Activated CD8-positive, alpha-beta T cell treated with anti-CD3 and anti-CD28 coated beads, Interleukin-2, amount 10 ng/mL, durations not matched to agents 7 days and 5 days (primary cell): ENCODE measurements at regions of chr1 and their contacts with region 1.

Region 1: DNA sequence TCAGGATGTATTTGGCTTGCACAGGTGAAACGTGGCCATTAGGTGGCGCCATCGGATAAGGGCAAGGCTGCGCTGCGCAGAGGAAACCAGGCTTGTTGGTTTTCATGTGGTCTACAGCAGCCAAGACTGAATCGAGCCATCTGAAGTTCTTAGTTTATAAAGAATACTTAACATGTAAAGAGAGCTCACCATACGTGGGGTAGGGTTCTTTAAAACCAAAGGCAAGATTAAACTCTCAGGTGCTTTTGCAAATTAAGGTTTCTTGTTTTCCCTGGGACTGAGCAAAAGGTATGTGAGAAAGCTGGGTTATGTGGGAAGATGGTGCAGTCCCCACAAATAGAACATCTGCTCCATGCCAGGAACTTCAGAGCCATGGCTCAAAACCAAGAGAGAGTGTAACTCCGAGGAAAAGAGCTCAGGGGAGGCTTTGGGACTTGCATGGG is 9.3 kb downstream of the MASP2 start:
- DNase-seq: peak; percentile 93
- ATAC-seq: peak; percentile 97
- H3K4me3 Mint-ChIP-seq: no peak overlapping the region
- H3K27ac Mint-ChIP-seq: no peak overlapping the region
- H3K4me1 Mint-ChIP-seq: peaks cover 9% of the 10 kb centered on the region
- H3K27me3 Mint-ChIP-seq: no peaks in the 10 kb centered on the region

Region 2: GRCh38 chr1:10867138-10867721 is 170.5 kb before region 1 on chr1:
- CTCF ChIA-PET with region 1: no interaction called
- POLR2A ChIA-PET with region 1: no interaction called
- DNase-seq: peak; percentile 63
- ATAC-seq: peak; percentile 90
- H3K4me3 Mint-ChIP-seq: no peak overlapping the region
- H3K27ac Mint-ChIP-seq: no peak overlapping the region
- H3K4me1 Mint-ChIP-seq: peaks cover 13% of the 10 kb centered on the region
- H3K27me3 Mint-ChIP-seq: peaks cover 61% of the 10 kb centered on the region

Region 3: GRCh38 chr1:11026052-11026451 is 11.7 kb before region 1 on chr1:
- CTCF ChIA-PET with region 1: interaction called, 22 read pairs
- POLR2A ChIA-PET with region 1: no interaction called
- DNase-seq: no peak
- ATAC-seq: no peak
- H3K4me3 Mint-ChIP-seq: no peak overlapping the region
- H3K27ac Mint-ChIP-seq: no peak overlapping the region
- H3K4me1 Mint-ChIP-seq: peaks cover 14% of the 10 kb centered on the region
- H3K27me3 Mint-ChIP-seq: no peaks in the 10 kb centered on the region

Region 4: GRCh38 chr1:11072216-11072917 is 34.6 kb after region 1 on chr1:
- CTCF ChIA-PET with region 1: interaction called, 23 read pairs
- POLR2A ChIA-PET with region 1: no interaction called
- DNase-seq: no peak
- ATAC-seq: no peak
- H3K4me3 Mint-ChIP-seq: no peak overlapping the region
- H3K27ac Mint-ChIP-seq: no peak overlapping the region
- H3K4me1 Mint-ChIP-seq: peaks cover 28% of the 10 kb centered on the region
- H3K27me3 Mint-ChIP-seq: no peaks in the 10 kb centered on the region

Region 5: DNA sequence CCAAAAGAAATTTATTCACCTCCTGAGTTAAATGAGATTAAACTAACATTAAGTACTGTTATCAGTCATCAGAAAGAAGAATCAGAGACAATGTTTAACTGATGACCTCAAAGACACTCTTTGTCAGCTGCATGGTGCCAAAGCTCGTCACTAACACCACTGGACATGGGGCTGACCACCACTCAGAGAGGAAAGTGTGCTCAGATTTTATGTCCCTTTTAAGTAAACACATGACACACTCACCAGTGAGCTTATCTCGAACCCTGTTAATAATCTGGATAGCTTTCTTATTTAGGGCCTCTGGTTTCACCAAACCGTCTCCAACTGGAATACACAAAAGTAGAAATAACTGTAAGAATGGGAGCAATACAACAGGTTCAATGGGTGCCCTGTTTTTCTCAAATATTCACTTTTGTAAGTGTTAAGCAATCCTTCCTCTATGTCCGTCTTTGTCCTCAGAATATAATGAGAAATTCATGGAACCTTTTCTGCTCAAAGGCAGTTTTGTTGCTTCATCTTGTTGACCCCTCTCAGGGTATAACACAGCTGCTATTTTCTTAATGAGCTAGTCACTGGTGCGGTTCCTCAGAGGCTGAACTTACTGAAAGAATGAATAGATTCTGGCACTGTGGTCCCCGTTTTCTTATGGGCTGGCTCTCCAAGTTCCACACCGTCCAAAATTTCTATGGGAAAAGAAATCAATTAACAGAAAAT is 71.4 kb after region 1 on chr1:
- CTCF ChIA-PET with region 1: interaction called, 29 read pairs
- POLR2A ChIA-PET with region 1: no interaction called
- DNase-seq: no peak
- ATAC-seq: no peak
- H3K4me3 Mint-ChIP-seq: no peak overlapping the region
- H3K27ac Mint-ChIP-seq: no peak overlapping the region
- H3K4me1 Mint-ChIP-seq: no peaks in the 10 kb centered on the region
- H3K27me3 Mint-ChIP-seq: no peaks in the 10 kb centered on the region

Region 6: GRCh38 chr1:11207898-11208611 is 170.3 kb after region 1 on chr1:
- CTCF ChIA-PET with region 1: interaction called, 14 read pairs
- POLR2A ChIA-PET with region 1: no interaction called
- DNase-seq: no peak
- ATAC-seq: no peak
- H3K4me3 Mint-ChIP-seq: no peak overlapping the region
- H3K27ac Mint-ChIP-seq: no peak overlapping the region
- H3K4me1 Mint-ChIP-seq: no peaks in the 10 kb centered on the region
- H3K27me3 Mint-ChIP-seq: no peaks in the 10 kb centered on the region

Region 7: DNA sequence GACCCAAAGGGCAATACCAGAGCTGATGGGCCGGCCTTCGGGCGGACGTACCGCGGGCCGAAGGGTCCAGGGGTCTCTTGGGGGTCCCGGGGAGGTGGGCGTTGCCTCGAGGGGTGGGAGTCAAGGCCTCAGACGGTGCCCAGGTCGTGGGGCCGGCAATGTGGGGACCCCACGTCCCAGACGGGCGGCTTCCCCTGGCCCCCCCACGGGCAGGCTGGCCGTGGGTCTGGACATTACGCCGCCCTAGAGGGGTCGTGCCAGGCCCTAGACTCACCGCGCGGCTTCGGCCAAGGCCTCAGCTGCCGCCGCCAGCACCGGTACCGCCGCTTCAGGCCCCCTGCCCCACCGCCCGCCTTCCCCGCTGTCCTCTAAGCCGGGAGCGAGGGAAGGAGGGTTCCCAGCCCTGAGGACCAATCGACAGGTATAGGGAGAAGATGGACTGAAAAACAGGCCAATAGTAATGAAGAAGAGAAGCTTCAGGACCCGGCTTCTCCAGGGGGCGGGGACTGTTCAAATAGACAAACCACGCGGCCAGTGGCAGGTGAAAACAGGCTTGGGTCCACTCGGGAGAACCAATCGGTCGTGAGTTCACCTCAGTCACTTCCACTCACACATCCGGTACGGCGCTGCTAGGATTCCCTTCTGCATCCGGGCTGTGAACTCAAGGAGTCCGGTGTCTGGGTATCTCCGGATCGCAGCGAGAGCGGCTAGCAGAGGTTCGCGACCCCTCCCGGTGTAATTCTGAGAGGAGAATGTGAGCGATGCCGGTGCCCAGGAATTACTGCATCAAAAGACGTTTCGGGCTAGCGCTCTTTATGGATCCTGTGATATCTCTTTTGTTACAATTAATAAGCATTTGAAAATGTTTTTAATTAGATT is 224.6 kb after region 1 on chr1 and contains the start of gene MTOR:
- CTCF ChIA-PET with region 1: interaction called, 15 read pairs
- POLR2A ChIA-PET with region 1: interaction called, 3 read pairs
- DNase-seq: peak; percentile 99
- ATAC-seq: peak; percentile 99
- H3K4me3 Mint-ChIP-seq: peak within 1 kb of the TSS; percentile 88
- H3K27ac Mint-ChIP-seq: peak within 1 kb of the TSS; percentile 88
- H3K4me1 Mint-ChIP-seq: peaks cover 15% of the 10 kb centered on the region
- H3K27me3 Mint-ChIP-seq: no peaks in the 10 kb centered on the region
- total RNA-seq, gene MTOR: 55.9 to 57.5 TPM